AG04450 (cell line): ENCODE measurements at regions of chr5 and their contacts with region 1.

Region 1: GRCh38 chr5:159987031-159987674 is 21.8 kb upstream of the TTC1 start:
- DNase-seq: no peak
- H3K4me3 ChIP-seq: peak overlapping the region; percentile 60
- H3K27ac ChIP-seq: no peak overlapping the region
- H3K27me3 ChIP-seq: peaks cover 2% of the 10 kb centered on the region
- CTCF ChIP-seq: peak; percentile 76

Region 2: GRCh38 chr5:159286420-159287035 is 700.6 kb before region 1 on chr5:
- CTCF ChIA-PET with region 1: interaction called, 15 read pairs
- POLR2A ChIA-PET with region 1: no interaction called
- DNase-seq: no peak
- H3K4me3 ChIP-seq: no peak overlapping the region
- H3K27ac ChIP-seq: no peak overlapping the region
- H3K27me3 ChIP-seq: no peaks in the 10 kb centered on the region
- CTCF ChIP-seq: peak; percentile 52

Region 3: DNA sequence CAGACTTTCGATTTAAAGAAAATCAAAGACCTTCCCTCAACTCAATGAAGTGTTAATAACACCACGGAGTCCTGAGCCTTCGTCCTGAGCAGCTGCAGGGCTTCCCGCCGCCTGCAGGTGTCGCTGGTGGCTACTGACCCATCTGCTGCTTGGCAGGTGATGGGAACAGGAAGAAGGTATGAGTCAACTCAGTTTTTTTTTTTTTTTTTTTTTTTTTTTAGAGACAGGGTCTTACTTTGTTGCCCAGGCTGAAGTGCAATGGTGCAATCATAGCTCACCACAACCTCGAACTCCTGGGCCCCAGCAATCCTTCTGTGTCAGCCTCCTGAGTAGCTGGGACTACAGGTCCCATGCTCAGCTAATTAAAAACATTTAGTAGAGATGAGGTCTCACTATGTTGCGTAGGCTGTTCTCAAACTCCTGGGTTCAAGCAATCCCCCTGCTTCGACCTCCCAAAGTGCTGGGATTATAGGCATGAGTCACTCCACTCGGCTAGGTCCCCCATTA is 471.2 kb before region 1 on chr5:
- CTCF ChIA-PET with region 1: interaction called, 11 read pairs
- POLR2A ChIA-PET with region 1: no interaction called
- DNase-seq: no peak
- H3K4me3 ChIP-seq: no peak overlapping the region
- H3K27ac ChIP-seq: no peak overlapping the region
- H3K27me3 ChIP-seq: no peaks in the 10 kb centered on the region
- CTCF ChIP-seq: peak; percentile 76

Region 4: DNA sequence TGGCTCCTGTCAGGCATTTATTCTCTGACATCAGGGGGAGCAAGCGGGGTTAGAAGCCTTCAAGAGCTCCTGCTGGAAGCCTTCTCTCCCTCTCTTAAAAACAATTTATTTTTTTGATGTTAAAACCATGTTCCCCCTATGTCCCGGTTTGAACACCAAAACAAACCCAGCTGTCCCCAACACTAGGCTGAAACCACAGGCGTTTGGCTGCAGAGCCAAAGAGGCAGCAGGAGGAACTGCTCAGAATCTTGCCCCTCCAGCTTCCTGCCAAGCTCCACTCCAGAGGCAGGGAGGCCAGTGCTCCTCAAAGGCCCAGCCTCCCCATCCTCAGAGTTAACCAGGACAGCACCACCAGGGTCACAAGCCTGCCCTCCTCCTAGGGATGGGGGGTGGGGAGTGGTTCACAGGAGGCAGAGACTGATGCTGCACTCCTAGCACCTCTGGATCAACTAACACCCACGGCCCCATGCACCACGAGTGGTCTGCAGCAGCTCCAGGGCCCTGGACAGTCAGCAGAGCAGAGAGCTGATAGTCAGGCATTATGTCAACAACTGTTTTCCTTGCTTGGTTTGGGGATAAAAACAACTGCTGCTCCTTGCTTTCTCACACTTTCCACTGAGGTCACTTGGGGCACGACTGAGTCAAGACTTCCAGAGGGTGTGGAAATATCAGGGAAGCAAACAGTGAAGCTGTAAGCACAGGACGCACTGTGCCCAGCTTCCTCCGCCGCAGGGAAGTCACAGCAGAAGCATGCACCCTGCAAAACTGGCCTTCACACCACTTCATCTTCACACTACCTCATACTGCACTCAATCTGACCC is 167.4 kb before region 1 on chr5:
- CTCF ChIA-PET with region 1: interaction called, 16 read pairs
- POLR2A ChIA-PET with region 1: no interaction called
- DNase-seq: no peak
- H3K4me3 ChIP-seq: no peak overlapping the region
- H3K27ac ChIP-seq: no peak overlapping the region
- H3K27me3 ChIP-seq: no peaks in the 10 kb centered on the region
- CTCF ChIP-seq: no peak

Region 5: DNA sequence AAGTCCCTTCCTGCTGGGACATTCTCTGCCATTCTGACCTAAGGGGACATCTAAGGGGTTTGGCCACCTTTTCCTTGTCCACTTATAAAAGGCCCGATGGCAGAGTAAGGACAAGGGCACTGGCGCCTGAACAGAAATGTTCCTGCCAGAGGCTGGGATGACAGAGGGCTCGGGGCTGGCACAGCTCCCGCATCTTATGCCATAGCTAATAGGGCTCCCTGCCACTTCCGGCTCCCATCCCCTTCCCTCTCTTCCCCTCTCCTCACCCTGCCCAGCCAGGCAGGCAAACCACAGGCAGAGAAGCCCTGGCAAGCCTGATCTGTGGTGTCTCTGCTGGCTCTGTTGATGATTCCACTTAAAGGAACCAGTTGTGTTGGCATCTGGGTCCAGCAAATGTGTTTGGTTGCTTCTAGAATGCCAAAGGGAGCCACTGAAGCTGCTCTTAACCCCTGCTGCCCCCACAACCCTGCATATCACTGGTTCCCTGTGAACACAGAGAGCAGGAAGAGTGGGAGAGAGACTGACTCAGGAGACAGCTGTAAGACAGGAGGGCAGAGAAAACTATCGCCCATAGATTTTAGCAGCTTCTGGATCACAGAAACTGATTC is 89.3 kb before region 1 on chr5:
- CTCF ChIA-PET with region 1: no interaction called
- POLR2A ChIA-PET with region 1: no interaction called
- DNase-seq: no peak
- H3K4me3 ChIP-seq: no peak overlapping the region
- H3K27ac ChIP-seq: no peak overlapping the region
- H3K27me3 ChIP-seq: no peaks in the 10 kb centered on the region
- CTCF ChIP-seq: no peak

Region 6: DNA sequence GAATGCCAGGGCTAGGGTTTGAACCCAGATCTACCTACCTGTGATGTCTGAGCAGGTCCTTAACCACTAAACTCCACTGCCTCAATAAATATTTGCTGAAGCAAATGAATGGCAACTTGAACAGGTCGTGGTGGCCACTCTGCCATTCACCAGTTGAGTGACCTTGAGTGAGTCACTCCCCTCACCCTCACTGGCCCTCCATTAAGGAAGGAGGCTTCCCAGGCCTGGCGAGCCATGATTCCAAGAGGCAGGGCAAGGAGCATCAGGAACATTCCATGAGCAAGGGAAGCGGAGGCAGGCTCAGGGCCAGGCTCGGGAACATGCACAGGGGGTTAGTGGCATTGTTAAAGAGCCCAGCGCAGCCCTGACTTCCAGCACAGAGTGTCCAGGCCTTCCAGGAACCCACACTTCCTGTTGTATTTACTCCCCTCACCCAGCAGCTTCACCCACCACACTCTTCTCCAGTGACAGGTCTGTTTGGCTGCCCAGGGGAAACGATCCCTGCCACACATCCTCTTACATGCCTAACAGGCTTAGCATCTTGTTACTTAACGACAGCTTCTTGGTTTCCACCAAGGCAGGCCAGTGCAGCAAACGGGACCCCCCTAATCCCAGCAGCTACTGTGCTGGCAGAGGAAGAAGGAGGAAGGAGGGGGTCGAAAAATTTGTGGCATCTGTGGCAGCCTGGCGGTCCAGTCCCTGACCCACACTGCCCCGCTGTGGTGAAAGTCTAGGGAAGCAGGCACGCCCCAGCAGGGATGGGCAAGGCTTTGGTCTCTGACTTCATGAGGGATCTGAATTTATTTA is 21.9 kb before region 1 on chr5:
- CTCF ChIA-PET with region 1: interaction called, 11 read pairs
- POLR2A ChIA-PET with region 1: no interaction called
- DNase-seq: no peak
- H3K4me3 ChIP-seq: no peak overlapping the region
- H3K27ac ChIP-seq: no peak overlapping the region
- H3K27me3 ChIP-seq: peaks cover 3% of the 10 kb centered on the region
- CTCF ChIP-seq: peak; percentile 75

Region 7: GRCh38 chr5:160001457-160001856 is 14.3 kb after region 1 on chr5:
- CTCF ChIA-PET with region 1: interaction called, 12 read pairs
- POLR2A ChIA-PET with region 1: no interaction called
- DNase-seq: no peak
- H3K4me3 ChIP-seq: no peak overlapping the region
- H3K27ac ChIP-seq: no peak overlapping the region
- H3K27me3 ChIP-seq: peaks cover 2% of the 10 kb centered on the region
- CTCF ChIP-seq: no peak